PC-9 (cell line): ENCODE measurements at regions of chr6 and their contacts with region 1.

Region 1: DNA sequence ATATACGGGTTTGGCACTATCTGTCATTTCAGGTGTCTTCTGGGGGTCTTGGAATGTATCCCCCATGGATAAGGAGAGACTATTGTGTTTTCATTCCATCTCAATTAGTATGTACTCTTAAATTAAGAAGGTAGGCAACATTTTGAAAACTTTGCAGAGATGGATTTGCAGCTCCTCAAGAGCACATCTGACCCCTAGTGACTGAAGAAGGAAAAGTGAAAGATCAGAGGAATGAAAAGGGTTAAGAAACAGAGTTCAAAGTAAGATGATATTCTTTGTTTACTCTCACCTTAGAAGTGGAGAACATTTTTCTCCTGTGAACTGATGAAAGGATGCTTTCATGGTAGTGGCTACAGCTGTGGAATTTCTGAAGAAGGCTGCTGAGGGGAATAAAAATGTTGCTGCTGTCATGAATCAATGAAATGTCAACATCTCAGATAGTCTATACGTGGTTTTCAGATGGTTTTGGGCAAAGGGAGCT is 41.5 kb downstream of the SH3BGRL2 start:
- DNase-seq: peak; percentile 2 to 48
- H3K4me3 ChIP-seq: no peak overlapping the region
- H3K27ac ChIP-seq: peak overlapping the region; percentile 76
- H3K4me1 ChIP-seq: peaks cover 31% of the 10 kb centered on the region
- H3K27me3 ChIP-seq: no peaks in the 10 kb centered on the region
- CTCF ChIP-seq: peak; percentile 61; the same call in 1 of the 2 replicates

Region 2: GRCh38 chr6:79233611-79234149 is 439.0 kb before region 1 on chr6:
- CTCF ChIA-PET with region 1: no interaction called
- POLR2A ChIA-PET with region 1: no interaction called
- intact Hi-C with region 1: loop called (anchors 5 kb)
- DNase-seq: peak; percentile 66 to 80
- H3K4me3 ChIP-seq: peak overlapping the region; percentile 92
- H3K27ac ChIP-seq: peak overlapping the region; percentile 6; the same call in 1 of the 2 replicates
- H3K4me1 ChIP-seq: peaks cover 10% of the 10 kb centered on the region
- H3K27me3 ChIP-seq: no peaks in the 10 kb centered on the region
- CTCF ChIP-seq: 0 out of 2 replicates have a peak, but pooled peaks have one; percentile 25

Region 3: GRCh38 chr6:79466207-79466834 is 206.3 kb before region 1 on chr6:
- CTCF ChIA-PET with region 1: no interaction called
- POLR2A ChIA-PET with region 1: no interaction called
- intact Hi-C with region 1: loop called (anchors 2 kb)
- DNase-seq: no peak
- H3K4me3 ChIP-seq: no peak overlapping the region
- H3K27ac ChIP-seq: no peak overlapping the region
- H3K4me1 ChIP-seq: peaks cover 18% of the 10 kb centered on the region
- H3K27me3 ChIP-seq: no peaks in the 10 kb centered on the region
- CTCF ChIP-seq: peak; percentile 71

Region 4: DNA sequence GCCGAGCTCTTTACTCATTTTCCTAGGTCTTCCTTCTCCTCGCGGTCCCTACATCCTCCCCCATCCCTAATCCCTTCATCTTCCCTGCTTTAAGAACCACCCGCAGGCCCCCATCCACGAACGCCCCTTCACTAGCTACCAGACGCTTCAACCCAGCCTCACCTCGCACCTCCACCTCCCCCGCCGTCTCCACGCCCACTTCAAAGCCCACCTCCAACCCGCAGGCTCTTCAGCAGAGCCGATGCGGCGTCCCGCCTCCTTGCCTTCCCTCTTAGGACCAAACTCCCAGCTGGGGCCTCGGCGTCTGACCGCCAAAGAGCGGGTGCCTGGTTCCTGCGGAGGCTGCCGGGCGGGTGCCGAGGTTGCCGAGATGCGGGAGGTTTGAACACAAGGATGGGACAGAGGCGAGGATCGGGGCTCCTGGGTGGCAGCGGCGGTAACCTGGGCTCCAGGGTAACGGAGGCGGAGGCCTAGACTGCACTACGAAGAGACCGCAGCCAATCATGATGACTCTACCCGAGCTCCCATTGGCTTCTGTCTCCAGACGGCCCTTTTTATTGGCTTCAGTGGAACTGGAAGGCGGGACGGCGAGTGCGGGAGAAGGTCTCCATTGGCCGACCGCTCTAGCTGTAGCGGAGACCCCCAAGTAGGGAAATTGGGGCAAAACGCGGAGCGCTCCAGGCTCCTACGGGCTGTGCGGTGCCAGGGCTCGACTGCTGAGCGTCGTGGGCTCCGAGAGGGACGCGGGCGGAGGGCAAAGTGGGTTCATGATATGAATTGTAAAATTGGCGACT is 135.5 kb before region 1 on chr6 and contains the start of gene LCA5:
- CTCF ChIA-PET with region 1: interaction called, 11 read pairs
- POLR2A ChIA-PET with region 1: interaction called, 3 read pairs
- intact Hi-C with region 1: loop called (anchors 2 kb)
- DNase-seq: peak; percentile 88 to 90
- H3K4me3 ChIP-seq: peak within 1 kb of the TSS; percentile 82
- H3K27ac ChIP-seq: peak within 1 kb of the TSS; percentile 52
- H3K4me1 ChIP-seq: no peaks in the 10 kb centered on the region
- H3K27me3 ChIP-seq: no peaks in the 10 kb centered on the region
- CTCF ChIP-seq: no peak
- total RNA-seq, gene LCA5: 4.8 and 5.4 TPM in 2 replicates

Region 5: GRCh38 chr6:79544939-79545450 is 127.7 kb before region 1 on chr6:
- CTCF ChIA-PET with region 1: interaction called, 5 read pairs
- POLR2A ChIA-PET with region 1: no interaction called
- intact Hi-C with region 1: loop called (anchors 1 kb)
- DNase-seq: peak; percentile 79 to 94
- H3K4me3 ChIP-seq: no peak overlapping the region
- H3K27ac ChIP-seq: peak overlapping the region; percentile 64
- H3K4me1 ChIP-seq: peaks cover 19% of the 10 kb centered on the region
- H3K27me3 ChIP-seq: no peaks in the 10 kb centered on the region
- CTCF ChIP-seq: no peak; the same call in 1 of the 2 replicates

Region 6: DNA sequence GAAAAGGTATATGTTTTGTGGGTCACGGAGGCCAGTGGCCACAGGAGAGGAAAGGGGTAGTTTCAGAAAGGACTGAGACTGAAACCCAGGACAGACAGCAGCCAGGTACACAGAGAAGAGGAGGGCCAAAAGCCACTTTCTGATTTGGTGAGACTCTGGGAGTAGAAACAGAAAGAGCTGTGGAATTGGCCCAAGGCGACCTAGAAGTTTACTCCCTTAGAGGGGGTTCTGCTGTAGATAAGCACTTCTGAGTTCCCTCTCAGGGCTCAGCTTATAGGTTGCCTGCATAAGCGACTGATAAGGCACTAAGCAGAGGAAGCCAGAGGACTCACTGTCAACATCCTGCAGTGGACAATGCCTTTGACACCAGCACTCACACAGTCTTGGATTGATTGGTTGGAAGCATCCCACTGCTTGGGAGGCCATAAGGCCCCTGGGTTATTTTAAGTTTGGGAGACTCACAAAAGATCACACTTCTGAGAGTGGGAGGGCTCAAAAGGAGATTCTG is 57.9 kb before region 1 on chr6:
- CTCF ChIA-PET with region 1: no interaction called
- POLR2A ChIA-PET with region 1: no interaction called
- intact Hi-C with region 1: no loop called
- DNase-seq: no peak
- H3K4me3 ChIP-seq: no peak overlapping the region
- H3K27ac ChIP-seq: no peak overlapping the region
- H3K4me1 ChIP-seq: peaks cover 25% of the 10 kb centered on the region; the same call in 1 of the 2 replicates
- H3K27me3 ChIP-seq: no peaks in the 10 kb centered on the region
- CTCF ChIP-seq: no peak

Region 7: GRCh38 chr6:79630883-79631692 is 41.6 kb before region 1 on chr6 and contains the start of gene SH3BGRL2:
- CTCF ChIA-PET with region 1: interaction called, 3 read pairs
- POLR2A ChIA-PET with region 1: no interaction called
- intact Hi-C with region 1: loop called (anchors 2 kb)
- DNase-seq: peak; percentile 37 to 75
- H3K4me3 ChIP-seq: peak within 1 kb of the TSS; percentile 90
- H3K27ac ChIP-seq: peak within 1 kb of the TSS; percentile 19; the same call in 1 of the 2 replicates
- H3K4me1 ChIP-seq: peaks cover 31% of the 10 kb centered on the region
- H3K27me3 ChIP-seq: no peaks in the 10 kb centered on the region
- CTCF ChIP-seq: no peak
- total RNA-seq, gene SH3BGRL2: 24.2 and 27.4 TPM in 2 replicates

Region 8: GRCh38 chr6:79762370-79762769 is 89.7 kb after region 1 on chr6:
- CTCF ChIA-PET with region 1: no interaction called
- POLR2A ChIA-PET with region 1: no interaction called
- intact Hi-C with region 1: no loop called
- DNase-seq: no peak
- H3K4me3 ChIP-seq: no peak overlapping the region
- H3K27ac ChIP-seq: no peak overlapping the region
- H3K4me1 ChIP-seq: no peaks in the 10 kb centered on the region
- H3K27me3 ChIP-seq: no peaks in the 10 kb centered on the region
- CTCF ChIP-seq: no peak; the same call in 1 of the 2 replicates